Sciatic nerve (tissue), 2 donors: ENCODE measurements at regions of chr10 and their contacts with region 1.

Region 1: DNA sequence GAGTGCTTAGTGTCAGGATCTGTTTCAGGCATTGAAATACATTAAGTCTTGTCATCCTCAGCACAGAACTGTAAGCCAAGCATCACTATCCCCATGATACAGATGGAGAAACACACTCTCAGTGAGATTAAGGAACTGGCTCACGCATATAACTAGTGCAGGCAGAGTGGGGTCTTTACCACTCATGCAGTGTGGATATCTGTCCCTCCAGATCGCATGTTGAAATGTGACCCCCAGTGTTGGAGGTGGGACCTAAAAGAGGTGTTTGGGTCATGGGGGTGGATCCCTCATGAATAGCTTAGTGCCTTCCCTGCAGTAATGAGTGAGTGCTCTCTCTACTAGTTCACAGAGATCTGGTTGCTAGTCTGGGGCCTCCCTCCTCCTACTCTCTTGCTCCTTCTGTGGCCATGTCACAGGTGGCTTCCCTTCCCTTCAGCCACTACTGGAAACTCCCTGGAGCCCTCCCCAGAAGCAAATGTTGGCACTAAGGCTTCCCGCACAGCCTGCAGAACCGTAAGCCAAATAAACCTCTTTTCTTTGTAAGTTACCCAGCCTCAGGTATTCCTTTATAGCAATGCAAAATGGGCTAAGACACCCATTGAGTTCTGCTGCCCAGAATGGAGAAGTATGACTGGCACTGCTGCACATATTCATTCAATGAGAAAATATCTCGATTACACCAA is 31.8 kb upstream of the MSMB start:
- DNase-seq: no peak
- ATAC-seq: no peak

Region 2: GRCh38 chr10:46029461-46030030 is 48.3 kb before region 1 on chr10:
- intact Hi-C with region 1: no loop called
- DNase-seq: no peak
- ATAC-seq: no peak

Region 3: GRCh38 chr10:46040024-46040423 is 37.8 kb before region 1 on chr10:
- intact Hi-C with region 1: loop called (anchors 2 kb)
- DNase-seq: no peak
- ATAC-seq: no peak